Motor neuron (in vitro differentiated cells): ENCODE measurements at regions of chr1 and their contacts with region 1.

Region 1: DNA sequence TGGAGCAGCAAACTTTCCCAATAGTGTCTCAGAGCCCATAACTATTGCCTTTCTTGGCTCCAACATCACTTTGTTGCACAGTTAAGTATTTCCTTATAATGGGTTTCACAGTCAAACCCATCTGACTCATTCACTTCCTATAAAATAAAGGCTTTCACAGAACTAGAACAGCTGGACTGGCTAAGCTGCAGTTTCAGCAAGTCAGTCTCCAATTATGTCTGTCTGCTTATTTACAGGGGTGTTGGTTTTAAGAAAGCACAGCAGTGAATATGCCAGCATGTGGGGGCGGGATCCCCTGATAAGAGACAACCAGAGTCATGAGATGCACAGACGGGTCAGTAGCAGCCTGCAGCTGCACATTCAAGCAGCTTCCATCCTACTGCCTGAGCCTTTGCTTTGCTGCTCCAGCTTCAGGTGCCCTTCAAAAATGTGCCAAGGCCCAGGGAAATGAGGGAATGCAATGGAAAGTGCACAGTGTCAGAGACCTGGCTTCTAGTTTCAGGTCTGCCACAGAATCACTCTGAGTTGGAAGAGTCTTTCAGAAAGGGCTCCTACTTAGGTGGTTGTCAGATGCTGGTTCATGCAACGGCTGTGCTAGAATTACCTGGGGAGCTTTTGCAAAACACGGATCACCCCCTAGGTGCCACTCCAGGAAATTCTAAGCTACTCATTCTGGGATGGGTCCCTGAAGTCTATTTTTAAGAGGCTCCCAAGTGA is 24.8 kb downstream of the RNF19B start:
- ATAC-seq: peak in 2 of 8 experiments; percentile 69 to 86
- H3K4me3 ChIP-seq: no peak overlapping the region
- H3K27ac ChIP-seq: no peak overlapping the region
- H3K4me1 ChIP-seq: no peaks in the 10 kb centered on the region

Region 2: GRCh38 chr1:32992489-32993323 is 52.9 kb after region 1 on chr1:
- in situ Hi-C with region 1: no loop called
- ATAC-seq: peak; percentile 65 to 99 (median 94)
- H3K4me3 ChIP-seq: no peak overlapping the region
- H3K27ac ChIP-seq: no peak overlapping the region
- H3K4me1 ChIP-seq: peaks cover 11 to 12% of the 10 kb centered on the region in 2 donors

Region 3: DNA sequence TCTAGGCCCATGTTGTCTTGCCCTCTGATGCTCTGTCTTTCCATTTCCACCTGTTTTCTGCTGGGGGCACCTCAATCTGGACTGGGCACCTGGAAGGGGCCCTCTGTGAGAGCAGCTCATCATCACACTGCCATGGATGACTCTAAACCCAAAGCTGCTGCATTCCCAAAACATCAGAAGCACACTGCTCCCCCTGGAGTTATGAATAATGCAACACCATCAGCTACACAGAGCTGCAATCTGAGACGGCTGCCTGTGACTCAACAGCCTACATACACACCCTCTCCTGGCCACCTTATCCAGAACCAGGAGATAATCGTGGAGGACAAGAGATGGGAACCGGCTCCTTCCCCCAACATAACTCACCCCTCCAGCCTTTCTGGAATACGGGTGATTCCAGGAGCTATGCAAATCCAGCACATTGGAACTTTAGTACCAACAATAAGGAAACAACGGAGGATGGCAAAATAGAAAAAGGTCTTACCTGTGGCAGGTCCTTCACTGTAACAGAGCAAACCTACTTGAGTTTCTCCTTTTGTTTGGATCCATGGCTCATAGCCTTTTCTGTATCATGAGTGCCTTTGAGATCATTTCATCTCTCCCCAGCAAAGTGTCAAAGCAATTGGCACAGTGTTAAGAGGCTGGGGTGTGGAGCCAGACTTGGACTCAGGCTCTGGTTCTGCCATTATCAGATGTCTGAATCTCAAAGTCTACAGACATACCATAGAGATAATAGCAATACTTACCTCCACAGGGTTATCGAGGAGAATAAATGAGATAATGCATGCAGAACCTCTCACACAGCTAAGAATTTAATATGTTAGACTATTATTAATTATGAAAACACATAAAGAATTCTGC is 67.6 kb after region 1 on chr1:
- in situ Hi-C with region 1: loop called in 1 of 9 experiments (anchors 10 kb)
- ATAC-seq: peak; percentile 85 to 93 (median 90)
- H3K4me3 ChIP-seq: no peak overlapping the region
- H3K27ac ChIP-seq: no peak overlapping the region
- H3K4me1 ChIP-seq: peaks cover 0 to 8% of the 10 kb centered on the region in 2 donors

Region 4: GRCh38 chr1:33055210-33056008 is 115.6 kb after region 1 on chr1:
- in situ Hi-C with region 1: loop called in 1 of 9 experiments (anchors 25 kb)
- ATAC-seq: peak; percentile 85 to 96 (median 92)
- H3K4me3 ChIP-seq: no peak overlapping the region
- H3K27ac ChIP-seq: no peak overlapping the region
- H3K4me1 ChIP-seq: no peaks in the 10 kb centered on the region